Naive thymus-derived CD8-positive, alpha-beta T cell (primary cell): ENCODE measurements at regions of chr12 and their contacts with region 1.

Region 1: GRCh38 chr12:2890388-2891239 is at the start of gene TULP3:
- DNase-seq: peak; percentile 96 to 99 (median 98)
- ATAC-seq: peak; percentile 96 to 97
- H3K4me3 Mint-ChIP-seq: peak within 1 kb of the TSS; percentile 91 to 99 (median 96)
- H3K27ac Mint-ChIP-seq: peak within 1 kb of the TSS; percentile 91 to 98 (median 96)
- H3K4me1 Mint-ChIP-seq: peaks cover 15 to 30% (median 21%) of the 10 kb centered on the region in 4 donors
- H3K27me3 Mint-ChIP-seq: no peaks in the 10 kb centered on the region
- polyA plus RNA-seq, gene TULP3: 5.8 to 9.3 (median 7.6) TPM

Region 2: DNA sequence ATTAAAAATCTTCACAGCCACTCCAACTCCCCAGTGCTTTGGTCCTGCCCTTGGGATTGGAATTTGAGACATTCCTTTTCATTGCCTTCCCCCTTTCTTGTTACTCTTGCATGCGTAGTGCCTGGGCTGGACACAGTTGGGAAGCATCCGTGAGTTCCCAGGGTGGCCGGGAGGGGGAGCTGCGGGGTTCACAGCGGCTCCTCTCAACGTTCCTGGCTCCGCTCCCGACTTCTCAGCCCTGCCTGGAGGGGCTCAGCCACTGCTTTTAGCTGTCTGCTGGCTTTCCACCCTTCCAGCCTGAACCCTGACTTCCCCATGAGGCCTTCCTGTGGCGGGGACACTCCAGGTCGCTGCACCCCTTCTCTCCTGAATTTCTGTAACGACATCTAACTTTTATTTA is 37.0 kb before region 1 on chr12:
- POLR2A ChIA-PET with region 1: no interaction called
- DNase-seq: peak in 4 of 10 donors; percentile 16 to 30 (median 24)
- ATAC-seq: peak in 1 of 2 donors; percentile 46
- H3K4me3 Mint-ChIP-seq: no peak overlapping the region
- H3K27ac Mint-ChIP-seq: no peak overlapping the region
- H3K4me1 Mint-ChIP-seq: peaks cover 0 to 9% (median 6%) of the 10 kb centered on the region in 4 donors
- H3K27me3 Mint-ChIP-seq: no peaks in the 10 kb centered on the region

Region 3: DNA sequence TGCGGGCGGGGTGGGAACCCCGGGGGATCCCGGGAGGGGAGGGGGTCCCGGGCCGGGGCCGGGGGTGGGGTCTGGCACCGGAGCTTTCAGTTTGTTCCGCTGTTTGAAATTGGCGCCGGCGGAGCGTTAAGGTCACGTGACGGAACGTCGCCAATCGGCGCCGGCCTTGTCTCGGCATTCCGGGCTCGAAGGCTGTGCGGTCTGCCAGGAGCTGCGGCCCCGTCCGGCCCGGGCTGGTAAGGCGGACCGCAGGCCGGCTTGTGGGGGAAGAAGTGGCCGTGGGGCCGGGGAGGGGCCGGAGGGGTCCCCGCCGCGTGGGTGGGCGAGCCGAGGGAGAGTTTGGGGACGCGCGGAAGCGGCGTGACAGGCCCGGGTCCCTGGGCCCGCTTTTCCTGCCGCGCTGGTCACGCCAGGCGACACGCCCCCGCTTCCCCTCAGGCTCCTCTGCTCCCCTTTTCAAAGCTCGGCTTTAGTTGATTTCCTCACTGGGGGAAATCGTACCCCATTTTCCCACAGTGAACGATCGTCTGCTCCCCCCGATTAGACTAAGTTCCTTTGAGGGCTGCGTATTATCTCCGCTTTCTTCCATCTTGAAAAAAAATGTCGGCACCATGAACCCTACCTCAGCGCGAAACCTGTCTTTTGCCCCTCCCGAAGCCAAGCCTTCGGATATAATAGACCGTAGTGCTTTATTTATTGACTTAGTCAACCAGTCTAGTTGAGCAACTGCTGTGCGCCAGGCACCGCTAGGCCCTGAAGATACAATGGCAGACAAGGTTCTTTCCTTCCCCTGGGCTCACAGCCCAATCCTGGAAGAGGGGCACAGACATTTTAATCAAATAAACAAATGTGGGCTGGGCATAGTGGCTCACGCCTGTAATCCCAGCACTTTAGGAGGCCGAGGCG is 13.3 kb before region 1 on chr12 and contains the starts of genes FOXM1 and RHNO1:
- POLR2A ChIA-PET with region 1: interaction called, 15 read pairs
- DNase-seq: peak; percentile 72 to 94 (median 85)
- ATAC-seq: peak; percentile 84 to 89
- H3K4me3 Mint-ChIP-seq: peak within 1 kb of the TSS; percentile 92 to 99 (median 98)
- H3K27ac Mint-ChIP-seq: peak within 1 kb of the TSS; percentile 94 to 100 (median 99)
- H3K4me1 Mint-ChIP-seq: peaks cover 20 to 38% (median 32%) of the 10 kb centered on the region in 4 donors
- H3K27me3 Mint-ChIP-seq: no peaks in the 10 kb centered on the region
- polyA plus RNA-seq, gene FOXM1: 0.19 TPM in 1 of 3 donors, not detected in the others
- polyA plus RNA-seq, gene RHNO1: 36.3 to 44.4 (median 38.6) TPM